ENCODE measurements at regions of chr17 and their contacts with region 1.

Region 1: DNA sequence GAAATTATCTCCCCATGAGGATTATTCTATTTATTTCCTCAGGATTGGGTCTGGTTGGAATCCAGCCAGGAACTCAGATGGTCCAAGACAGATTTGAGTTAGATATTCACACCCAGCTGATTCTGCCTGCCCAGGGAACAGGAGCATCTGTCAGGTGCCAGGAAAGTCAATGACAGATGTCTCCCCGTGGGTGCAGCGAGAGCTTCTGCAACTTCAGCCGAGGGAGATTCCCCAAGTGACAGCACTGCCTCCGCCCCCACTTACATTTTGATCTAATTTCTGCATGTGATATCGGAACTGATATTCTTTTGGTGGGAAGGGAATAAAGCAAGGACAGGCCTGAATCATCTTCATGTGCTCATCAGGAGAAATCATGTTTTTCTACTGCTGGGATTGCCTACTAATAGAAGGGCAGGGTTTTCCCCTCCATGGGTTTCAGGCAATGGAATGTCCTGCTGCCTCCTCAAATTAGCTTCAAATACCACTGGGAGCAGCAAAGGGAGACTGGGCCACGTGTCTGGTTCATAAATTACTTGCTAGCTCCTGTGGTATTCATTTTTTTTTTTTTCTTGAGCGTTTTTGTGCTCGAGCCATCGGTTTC is 15.7 kb upstream of the DHX8 start:
- DNase-seq: peak; percentile 55
- H3K4me3 Mint-ChIP-seq: peak overlapping the region; percentile 9
- H3K27ac Mint-ChIP-seq: peak overlapping the region; percentile 88
- H3K4me1 Mint-ChIP-seq: peaks cover 27% of the 10 kb centered on the region
- H3K27me3 Mint-ChIP-seq: no peaks in the 10 kb centered on the region
- CTCF ChIP-seq: no peak

Region 2: DNA sequence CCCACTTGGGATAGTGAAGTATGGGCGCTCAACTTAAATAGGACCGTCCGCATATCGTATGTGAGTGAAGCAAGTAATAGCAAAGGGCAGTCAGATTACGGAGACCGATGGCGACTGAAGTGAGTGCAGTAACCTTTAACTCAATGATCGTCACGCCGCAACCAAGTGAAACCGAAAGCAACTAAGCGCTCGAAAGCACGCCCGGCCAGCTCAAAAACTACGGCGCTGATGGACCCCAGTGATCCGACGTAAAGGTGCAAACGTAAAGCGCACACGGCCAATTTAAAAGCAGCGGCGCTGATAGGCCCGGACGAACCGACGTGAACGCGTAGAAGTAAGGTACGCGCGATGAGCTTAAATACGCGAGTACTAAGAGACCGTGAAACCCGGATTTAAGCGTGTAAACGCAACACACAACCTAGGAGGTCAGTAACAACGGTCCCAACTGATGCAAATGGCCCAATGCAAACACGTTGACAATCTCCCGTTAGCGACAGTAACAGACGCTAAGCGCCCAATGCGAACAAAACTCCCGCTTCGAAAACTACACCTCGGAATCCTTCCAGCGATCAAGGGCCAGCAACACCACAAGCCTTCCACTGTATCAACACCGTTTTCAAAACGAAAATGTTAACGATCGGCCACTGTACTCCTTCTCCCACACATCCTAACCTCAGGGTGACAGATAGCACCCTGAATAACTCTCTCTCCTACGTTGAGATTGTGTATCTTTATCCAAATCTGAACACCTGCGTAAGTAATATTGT is 107.2 kb before region 1 on chr17:
- CTCF ChIA-PET with region 1: no interaction called
- POLR2A ChIA-PET with region 1: interaction called, 20 read pairs
- intact Hi-C with region 1: no loop called
- DNase-seq: peak; percentile 99
- H3K4me3 Mint-ChIP-seq: peak overlapping the region; percentile 79
- H3K27ac Mint-ChIP-seq: peak overlapping the region; percentile 100
- H3K4me1 Mint-ChIP-seq: peaks cover 26% of the 10 kb centered on the region
- H3K27me3 Mint-ChIP-seq: no peaks in the 10 kb centered on the region
- CTCF ChIP-seq: no peak

Region 3: GRCh38 chr17:43418441-43419374 is 49.4 kb before region 1 on chr17:
- CTCF ChIA-PET with region 1: interaction called, 7 read pairs
- POLR2A ChIA-PET with region 1: interaction called, 640 read pairs
- intact Hi-C with region 1: no loop called
- DNase-seq: peak; percentile 94
- H3K4me3 Mint-ChIP-seq: peak overlapping the region; percentile 59
- H3K27ac Mint-ChIP-seq: peak overlapping the region; percentile 76
- H3K4me1 Mint-ChIP-seq: peaks cover 41% of the 10 kb centered on the region
- H3K27me3 Mint-ChIP-seq: no peaks in the 10 kb centered on the region
- CTCF ChIP-seq: no peak

Region 4: DNA sequence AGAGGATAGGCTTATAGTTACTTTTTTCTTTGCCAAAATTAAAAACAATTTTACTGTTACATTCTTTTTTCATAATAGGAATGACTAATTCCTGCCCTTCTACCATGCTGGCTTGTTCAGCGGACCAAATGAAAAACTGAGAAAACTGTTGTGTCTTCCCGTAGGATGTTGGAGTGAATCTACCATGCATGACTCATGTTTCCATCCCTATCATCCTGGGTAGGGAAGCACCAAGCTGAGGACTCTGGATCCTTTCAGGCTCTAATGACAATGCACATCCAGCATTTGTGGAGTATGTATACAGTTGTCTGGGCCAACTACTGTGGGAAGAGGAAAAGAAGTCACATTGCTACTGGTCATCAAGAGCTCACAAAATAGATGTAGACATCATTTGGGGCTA is 25.4 kb before region 1 on chr17:
- CTCF ChIA-PET with region 1: interaction called, 3 read pairs
- POLR2A ChIA-PET with region 1: interaction called, 161 read pairs
- intact Hi-C with region 1: no loop called
- DNase-seq: peak; percentile 66
- H3K4me3 Mint-ChIP-seq: no peak overlapping the region
- H3K27ac Mint-ChIP-seq: no peak overlapping the region
- H3K4me1 Mint-ChIP-seq: peaks cover 22% of the 10 kb centered on the region
- H3K27me3 Mint-ChIP-seq: no peaks in the 10 kb centered on the region
- CTCF ChIP-seq: no peak

Region 5: DNA sequence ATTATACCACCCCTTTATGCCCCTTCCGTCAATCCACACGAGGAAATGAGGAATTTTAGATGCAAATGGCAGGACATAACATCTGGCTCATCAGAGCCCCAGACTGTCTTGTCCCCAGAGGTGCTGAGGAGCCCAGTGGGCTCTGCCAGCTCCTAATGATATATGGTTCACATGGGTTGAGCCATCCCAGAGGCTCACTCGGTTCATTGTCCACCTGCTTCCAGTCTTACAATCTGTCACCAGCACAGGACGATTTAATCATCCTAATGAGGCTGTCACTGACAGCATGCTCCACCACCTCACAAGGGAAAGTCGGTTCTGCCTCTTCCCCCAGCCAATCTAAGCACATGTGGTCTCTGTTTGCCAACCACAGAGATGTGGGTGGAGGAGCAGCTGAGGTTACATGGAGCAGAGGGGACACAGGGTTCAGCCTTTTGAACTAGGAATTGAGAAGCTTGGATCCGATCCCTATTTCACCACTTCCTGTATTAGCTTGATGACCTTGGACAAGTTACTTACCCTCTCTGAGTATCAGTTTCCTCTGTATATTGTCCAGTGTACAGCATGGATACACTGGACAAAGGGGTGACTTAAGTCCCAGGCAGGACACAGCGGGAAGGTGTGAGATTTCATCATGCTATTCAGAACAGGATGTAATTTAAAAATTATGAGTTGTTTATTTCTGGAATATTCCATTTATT is 11.3 kb before region 1 on chr17:
- CTCF ChIA-PET with region 1: interaction called, 4 read pairs
- POLR2A ChIA-PET with region 1: interaction called, 151 read pairs
- intact Hi-C with region 1: loop called (anchors 1 kb)
- DNase-seq: peak; percentile 91
- H3K4me3 Mint-ChIP-seq: no peak overlapping the region
- H3K27ac Mint-ChIP-seq: peak overlapping the region; percentile 63
- H3K4me1 Mint-ChIP-seq: peaks cover 21% of the 10 kb centered on the region
- H3K27me3 Mint-ChIP-seq: no peaks in the 10 kb centered on the region
- CTCF ChIP-seq: no peak

Measured in MCF 10A (cell line).